H1 (cell line): ENCODE measurements at regions of chr18 and their contacts with region 1.

Region 1: DNA sequence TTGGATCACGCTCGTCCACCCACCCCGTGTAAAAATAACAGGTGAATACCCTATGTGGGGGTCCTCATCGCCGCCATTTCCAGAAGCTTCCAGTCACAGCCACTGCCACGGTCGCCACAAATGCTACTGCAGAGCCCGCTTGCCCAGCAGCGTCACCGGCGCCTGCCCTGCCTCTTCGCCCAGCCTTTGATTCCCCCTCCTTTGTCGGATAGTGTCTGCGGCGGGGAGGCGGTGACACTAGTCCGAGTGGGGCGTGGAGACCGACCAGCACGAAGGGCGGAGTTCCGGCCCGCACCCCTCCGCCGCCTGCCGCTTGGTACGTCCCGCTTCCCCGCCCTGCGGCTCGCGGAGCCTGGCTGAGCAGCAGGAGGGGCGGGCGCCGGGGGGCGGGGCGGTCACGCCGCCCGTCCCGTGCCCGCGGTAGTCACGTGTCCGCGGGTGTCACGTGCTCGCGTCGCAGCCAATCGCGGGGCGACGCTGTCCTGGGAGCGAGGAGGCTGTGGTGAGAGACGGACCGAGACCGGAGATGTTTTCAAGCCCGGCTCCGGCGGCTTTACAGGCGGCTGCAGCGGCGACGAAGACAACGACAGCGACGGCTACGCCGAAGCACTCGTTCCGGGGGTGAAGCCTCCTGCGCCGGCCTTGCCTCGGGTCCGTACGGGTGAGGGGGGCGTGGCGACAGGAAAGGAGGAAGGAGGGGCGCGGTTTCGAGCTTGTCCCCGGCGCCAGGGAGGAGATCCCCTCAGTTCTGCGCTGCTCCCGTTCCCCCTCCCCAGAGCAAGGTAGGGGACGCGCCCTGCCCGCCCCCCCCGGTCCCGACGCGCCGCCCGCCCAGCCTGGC is at the start of gene ANKRD12:
- DNase-seq: peak; percentile 88 to 95
- H3K4me3 ChIP-seq: peak within 1 kb of the TSS; percentile 79 to 95 (median 85)
- H3K27ac ChIP-seq: peak within 1 kb of the TSS; percentile 92
- H3K4me1 ChIP-seq: peaks cover 0 to 3% (median 1%) of the 10 kb centered on the region in 4 experiments; a peak in 2 of 7 replicates
- H3K27me3 ChIP-seq: no peaks in the 10 kb centered on the region
- CTCF ChIP-seq: no peak
- EP300 ChIP-seq: peak in 1 of 2 experiments; percentile 95; a peak in 2 of 3 replicates
- POLR2A ChIP-seq: peak in 1 of 2 experiments; percentile 81; a peak in 1 of 3 replicates
- RAD21 ChIP-seq: no peak
- total RNA-seq, gene ANKRD12: 37.9 and 40.9 TPM in 2 replicates

Region 2: DNA sequence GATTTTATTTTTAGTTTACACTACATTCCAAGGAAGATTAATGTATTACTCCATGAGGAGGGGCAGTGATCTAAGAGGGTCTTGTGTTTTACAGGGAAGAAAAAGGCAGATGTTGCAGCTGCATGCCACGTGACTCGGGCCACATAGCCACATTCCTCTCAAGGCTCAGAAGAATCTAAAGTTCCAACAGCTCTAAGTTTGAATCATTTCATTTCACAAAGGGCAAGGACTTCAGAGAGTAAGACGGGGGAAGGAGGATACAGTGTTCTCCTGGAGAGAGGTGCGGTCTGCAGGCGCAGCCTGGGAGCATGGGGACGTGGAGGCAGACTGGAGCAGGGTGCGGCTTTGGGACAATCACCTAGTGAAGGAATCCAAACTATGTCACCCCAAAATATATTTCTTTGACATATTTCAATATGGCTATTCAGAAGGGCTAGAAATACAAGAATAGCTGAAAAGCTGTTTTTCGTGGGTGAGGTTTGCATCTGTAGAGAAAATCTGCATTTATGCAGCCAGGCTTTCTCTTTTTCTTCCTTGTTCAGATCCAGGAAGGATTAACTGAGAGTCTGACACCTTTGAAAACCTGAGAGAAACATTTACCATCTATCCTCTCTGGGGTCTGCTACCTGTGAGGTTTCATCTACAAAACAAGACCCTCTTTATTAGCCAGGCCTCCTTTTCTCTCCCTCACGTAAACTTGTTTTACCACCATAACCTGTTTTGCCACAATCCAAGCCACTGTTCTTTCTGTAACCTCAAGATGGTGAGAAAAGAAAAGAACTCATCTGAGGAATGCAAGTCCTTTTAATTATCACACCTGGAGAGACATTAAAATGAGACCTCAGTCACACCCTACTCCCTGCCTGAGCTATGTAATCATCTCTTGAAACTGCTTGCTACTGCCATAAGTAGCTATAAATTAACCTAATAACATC is 199.1 kb before region 1 on chr18:
- CTCF ChIA-PET with region 1: no interaction called
- POLR2A ChIA-PET with region 1: no interaction called
- DNase-seq: no peak
- H3K4me3 ChIP-seq: no peak overlapping the region
- H3K27ac ChIP-seq: peak overlapping the region; percentile 84
- H3K4me1 ChIP-seq: peaks cover 4 to 17% (median 13%) of the 10 kb centered on the region in 4 experiments; a peak in 6 of 7 replicates
- H3K27me3 ChIP-seq: no peaks in the 10 kb centered on the region
- CTCF ChIP-seq: no peak
- EP300 ChIP-seq: peak in 1 of 2 experiments; percentile 68; a peak in 1 of 3 replicates
- POLR2A ChIP-seq: peak in 1 of 2 experiments; percentile 28; a peak in 1 of 3 replicates
- RAD21 ChIP-seq: no peak

Region 3: GRCh38 chr18:9102508-9103375 is 33.8 kb before region 1 on chr18 and contains the start of gene NDUFV2:
- CTCF ChIA-PET with region 1: interaction called, 3 read pairs
- POLR2A ChIA-PET with region 1: interaction called, 44 read pairs
- DNase-seq: peak; percentile 82 to 98
- H3K4me3 ChIP-seq: peak within 1 kb of the TSS; percentile 77 to 92 (median 86)
- H3K27ac ChIP-seq: peak within 1 kb of the TSS; percentile 91
- H3K4me1 ChIP-seq: peaks cover 0 to 19% (median 8%) of the 10 kb centered on the region in 4 experiments; a peak in 3 of 7 replicates
- H3K27me3 ChIP-seq: peaks cover 0 to 2% (median 0%) of the 10 kb centered on the region in 4 experiments; a peak in 1 of 7 replicates
- CTCF ChIP-seq: no peak
- EP300 ChIP-seq: no peak
- POLR2A ChIP-seq: peak in 1 of 2 experiments; percentile 91; a peak in 2 of 3 replicates
- RAD21 ChIP-seq: no peak
- total RNA-seq, gene NDUFV2: 191 and 196 TPM in 2 replicates

Region 4: DNA sequence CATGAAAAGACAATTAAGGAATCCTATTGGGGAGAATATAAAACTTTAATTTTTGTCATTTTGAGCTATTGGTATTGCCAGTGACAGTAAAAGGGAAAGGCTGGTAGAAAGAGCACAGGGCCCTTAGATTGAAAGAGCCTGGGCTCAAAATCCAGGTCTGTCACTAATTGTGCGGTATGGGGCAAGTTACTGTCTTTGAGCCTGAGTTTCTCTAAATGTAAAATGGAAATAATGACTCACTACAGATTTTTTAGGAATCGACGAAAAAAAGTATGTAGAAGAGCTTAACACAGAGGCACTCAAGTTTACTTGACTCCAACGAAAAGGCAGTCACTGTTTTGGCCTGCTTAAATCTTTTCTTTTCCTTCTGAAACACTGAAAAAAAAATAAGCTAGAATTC is 27.0 kb before region 1 on chr18:
- CTCF ChIA-PET with region 1: interaction called, 3 read pairs
- POLR2A ChIA-PET with region 1: interaction called, 44 read pairs
- DNase-seq: no peak
- H3K4me3 ChIP-seq: peak overlapping the region in 1 of 4 experiments; percentile 25; a peak in 2 of 8 replicates
- H3K27ac ChIP-seq: no peak overlapping the region
- H3K4me1 ChIP-seq: peaks cover 0 to 18% (median 8%) of the 10 kb centered on the region in 4 experiments; a peak in 5 of 7 replicates
- H3K27me3 ChIP-seq: peaks cover 0 to 2% (median 0%) of the 10 kb centered on the region in 4 experiments; a peak in 1 of 7 replicates
- CTCF ChIP-seq: no peak
- EP300 ChIP-seq: no peak
- POLR2A ChIP-seq: no peak
- RAD21 ChIP-seq: no peak

Region 5: DNA sequence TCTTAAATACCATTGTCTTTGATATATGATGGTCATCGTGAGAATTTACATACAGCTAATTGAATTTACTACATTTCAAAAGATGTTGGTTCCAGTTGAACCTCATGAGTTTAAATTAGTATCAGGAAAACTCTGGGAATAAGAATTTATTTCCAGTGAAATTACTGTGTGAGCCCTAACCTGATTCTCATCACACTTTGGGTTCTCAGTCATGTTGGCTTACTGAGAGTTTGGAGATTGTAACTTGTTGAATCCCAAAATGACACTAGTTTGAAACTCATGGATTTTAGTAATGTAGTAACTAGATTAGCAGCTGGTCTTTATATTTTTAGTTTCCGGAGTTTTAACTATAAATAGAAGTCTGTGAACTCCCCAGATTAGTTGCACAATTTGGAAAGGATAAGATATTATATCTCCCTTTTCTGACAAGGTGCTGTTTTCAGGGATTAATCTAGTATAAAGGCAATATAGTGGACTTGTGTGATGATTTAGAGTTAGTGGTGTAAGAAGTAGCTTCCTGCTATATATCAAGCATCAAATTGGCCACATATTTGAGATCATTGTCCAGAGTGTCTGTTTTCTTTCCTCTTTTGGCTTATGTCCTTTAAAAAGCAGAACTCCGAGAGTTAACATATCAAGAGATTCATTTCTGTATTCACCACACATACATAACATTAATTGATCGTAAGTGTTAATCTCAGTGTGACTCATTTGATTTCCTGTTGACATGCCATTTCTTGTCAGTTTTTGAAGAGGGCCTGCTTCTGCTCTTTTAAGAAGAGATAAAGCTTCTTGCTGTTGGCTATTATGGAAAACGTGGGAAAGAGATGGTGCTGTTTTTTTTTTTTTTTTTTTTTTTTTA is 18.3 kb before region 1 on chr18:
- CTCF ChIA-PET with region 1: no interaction called
- POLR2A ChIA-PET with region 1: interaction called, 32 read pairs
- DNase-seq: no peak
- H3K4me3 ChIP-seq: no peak overlapping the region
- H3K27ac ChIP-seq: no peak overlapping the region
- H3K4me1 ChIP-seq: no peaks in the 10 kb centered on the region; a peak in 1 of 7 replicates
- H3K27me3 ChIP-seq: no peaks in the 10 kb centered on the region
- CTCF ChIP-seq: no peak
- EP300 ChIP-seq: no peak
- POLR2A ChIP-seq: no peak
- RAD21 ChIP-seq: no peak

Region 6: DNA sequence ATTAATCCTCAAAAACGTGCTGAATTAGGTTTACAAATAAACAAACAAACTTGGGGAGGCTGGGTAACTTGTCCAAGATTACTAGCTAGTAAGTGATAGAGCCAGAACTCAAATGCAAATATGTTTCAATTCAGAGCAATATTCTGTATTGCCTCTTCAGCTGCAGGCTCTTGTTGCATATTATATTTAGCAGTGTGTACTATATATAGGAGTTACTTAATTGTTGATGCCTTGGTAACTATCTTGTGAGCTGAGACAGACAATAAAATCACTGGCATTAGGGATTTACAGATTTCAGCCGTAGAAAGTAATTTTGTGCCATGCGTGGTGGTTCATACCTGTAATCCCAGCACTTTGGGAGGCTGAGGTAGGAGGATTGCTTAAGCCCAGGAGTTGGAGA is 10.2 kb before region 1 on chr18:
- CTCF ChIA-PET with region 1: interaction called, 6 read pairs
- POLR2A ChIA-PET with region 1: interaction called, 30 read pairs
- DNase-seq: no peak
- H3K4me3 ChIP-seq: no peak overlapping the region
- H3K27ac ChIP-seq: no peak overlapping the region
- H3K4me1 ChIP-seq: no peaks in the 10 kb centered on the region
- H3K27me3 ChIP-seq: no peaks in the 10 kb centered on the region
- CTCF ChIP-seq: no peak
- EP300 ChIP-seq: no peak
- POLR2A ChIP-seq: no peak
- RAD21 ChIP-seq: no peak

Region 7: GRCh38 chr18:9188359-9189231 is 52.1 kb after region 1 on chr18:
- CTCF ChIA-PET with region 1: no interaction called
- POLR2A ChIA-PET with region 1: no interaction called
- DNase-seq: no peak
- H3K4me3 ChIP-seq: no peak overlapping the region
- H3K27ac ChIP-seq: no peak overlapping the region
- H3K4me1 ChIP-seq: no peaks in the 10 kb centered on the region
- H3K27me3 ChIP-seq: no peaks in the 10 kb centered on the region
- CTCF ChIP-seq: no peak
- EP300 ChIP-seq: no peak
- POLR2A ChIP-seq: no peak
- RAD21 ChIP-seq: no peak